Breast epithelium (tissue), 4 donors: ENCODE measurements at regions of chrX and their contacts with region 1.

Region 1: DNA sequence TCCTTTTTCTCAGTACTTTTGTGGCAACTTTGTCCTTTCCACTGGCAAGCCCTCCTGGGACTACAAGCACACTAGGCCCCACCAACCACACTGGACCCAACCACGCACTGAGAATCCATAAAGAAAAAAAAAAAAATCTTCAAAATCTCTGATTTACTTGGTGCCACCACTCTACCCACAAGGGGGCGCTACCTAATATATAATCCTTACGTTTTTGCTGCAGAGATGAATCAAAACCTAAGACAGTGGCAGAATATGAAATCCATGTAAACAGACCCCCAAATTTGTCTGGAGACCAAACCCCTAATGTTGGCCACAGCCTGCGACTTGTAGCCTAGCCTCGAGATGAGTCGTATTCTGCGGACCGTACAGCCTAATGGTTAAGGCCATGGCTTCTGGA is 63.5 kb upstream of the ARHGAP36 start:
- DNase-seq: no peak
- H3K4me3 ChIP-seq: no peak overlapping the region
- H3K27ac ChIP-seq: no peak overlapping the region
- H3K4me1 ChIP-seq: no peaks in the 10 kb centered on the region
- H3K27me3 ChIP-seq: peaks cover 0 to 70% of the 10 kb centered on the region in 2 donors
- CTCF ChIP-seq: no peak
- POLR2A ChIP-seq: no peak

Region 2: GRCh38 chrX:131146702-131147101 is 152.0 kb after region 1 on chrX:
- intact Hi-C with region 1: no loop called
- DNase-seq: no peak
- H3K4me3 ChIP-seq: no peak overlapping the region
- H3K27ac ChIP-seq: no peak overlapping the region
- H3K4me1 ChIP-seq: no peaks in the 10 kb centered on the region
- H3K27me3 ChIP-seq: peaks cover 0 to 6% of the 10 kb centered on the region in 2 donors
- CTCF ChIP-seq: no peak
- POLR2A ChIP-seq: no peak

Region 3: DNA sequence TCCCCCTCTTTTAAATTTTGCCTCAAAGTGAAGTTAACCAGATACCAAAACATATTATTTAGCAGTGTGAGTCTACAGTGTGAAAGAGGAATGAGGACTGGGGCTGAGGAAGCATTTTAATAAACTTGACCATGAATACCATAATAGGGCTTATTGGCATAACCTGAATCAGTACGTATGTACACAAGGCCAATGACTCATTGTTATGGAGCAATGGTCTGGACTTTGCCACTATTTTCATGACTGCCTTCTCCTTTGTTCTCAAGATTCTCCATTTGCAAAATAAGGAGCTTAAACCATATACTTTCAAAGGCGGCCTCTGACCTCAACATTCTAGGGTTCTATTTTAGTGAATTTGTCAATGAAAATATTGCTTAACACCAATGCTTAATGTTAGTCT is 446.4 kb after region 1 on chrX:
- intact Hi-C with region 1: loop called (anchors 5 kb)
- DNase-seq: no peak
- H3K4me3 ChIP-seq: no peak overlapping the region
- H3K27ac ChIP-seq: no peak overlapping the region
- H3K4me1 ChIP-seq: no peaks in the 10 kb centered on the region
- H3K27me3 ChIP-seq: peaks cover 0 to 4% of the 10 kb centered on the region in 2 donors
- CTCF ChIP-seq: no peak
- POLR2A ChIP-seq: no peak